Activated CD4-positive, alpha-beta T cell treated with anti-CD3 and anti-CD28 coated beads for 36 hours (primary cell): ENCODE measurements at regions of chr9 and their contacts with region 1.

Region 1: GRCh38 chr9:73183917-73184861 is 32.5 kb downstream of the ANXA1 start:
- DNase-seq: no peak
- ATAC-seq: no peak
- H3K4me3 Mint-ChIP-seq: no peak overlapping the region
- H3K27ac Mint-ChIP-seq: no peak overlapping the region
- H3K4me1 Mint-ChIP-seq: peaks cover 7% of the 10 kb centered on the region
- H3K27me3 Mint-ChIP-seq: peaks cover 9% of the 10 kb centered on the region

Region 2: GRCh38 chr9:72856972-72857623 is 327.1 kb before region 1 on chr9:
- CTCF ChIA-PET with region 1: interaction called, 3 read pairs
- POLR2A ChIA-PET with region 1: no interaction called
- intact Hi-C with region 1: loop called (anchors 5 kb)
- DNase-seq: peak; percentile 9
- ATAC-seq: no peak
- H3K4me3 Mint-ChIP-seq: no peak overlapping the region
- H3K27ac Mint-ChIP-seq: no peak overlapping the region
- H3K4me1 Mint-ChIP-seq: no peaks in the 10 kb centered on the region
- H3K27me3 Mint-ChIP-seq: no peaks in the 10 kb centered on the region

Region 3: GRCh38 chr9:72871685-72872084 is 312.5 kb before region 1 on chr9:
- CTCF ChIA-PET with region 1: no interaction called
- POLR2A ChIA-PET with region 1: no interaction called
- intact Hi-C with region 1: loop called in 1 of 2 experiments (anchors 5 kb)
- DNase-seq: no peak
- ATAC-seq: no peak
- H3K4me3 Mint-ChIP-seq: no peak overlapping the region
- H3K27ac Mint-ChIP-seq: no peak overlapping the region
- H3K4me1 Mint-ChIP-seq: no peaks in the 10 kb centered on the region
- H3K27me3 Mint-ChIP-seq: peaks cover 4% of the 10 kb centered on the region

Region 4: DNA sequence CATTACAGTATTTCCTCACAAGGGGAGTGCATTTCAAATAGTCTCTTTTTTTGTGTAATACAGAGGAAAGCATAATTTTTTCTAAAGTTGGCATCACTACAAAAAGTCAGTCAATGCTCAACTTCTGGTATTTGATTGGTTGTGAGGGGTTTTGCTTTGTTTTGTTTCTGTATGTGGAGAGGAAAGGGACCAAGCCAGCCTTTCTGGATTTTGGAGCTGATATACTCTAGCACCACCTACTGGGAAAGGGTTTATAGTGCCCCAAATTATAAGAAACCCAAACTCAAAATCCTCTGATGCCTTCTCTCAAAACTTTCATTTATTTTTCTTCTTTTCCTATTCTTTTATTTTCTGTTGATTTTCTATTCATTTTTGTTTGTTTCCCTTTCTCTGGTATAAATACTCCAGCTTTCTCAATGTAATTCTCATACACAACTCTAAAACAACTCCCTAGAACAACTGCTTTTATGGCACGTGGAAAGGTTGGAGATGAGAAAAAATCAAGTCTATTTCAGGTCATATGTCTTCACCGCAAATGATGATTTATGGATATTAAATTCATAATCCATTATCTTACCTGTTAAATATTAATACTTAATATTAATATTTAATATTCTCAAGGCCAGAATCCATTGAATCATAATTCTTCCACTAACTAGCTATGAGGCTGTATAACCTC is 102.1 kb before region 1 on chr9:
- CTCF ChIA-PET with region 1: interaction called, 16 read pairs
- POLR2A ChIA-PET with region 1: no interaction called
- intact Hi-C with region 1: no loop called
- DNase-seq: no peak
- ATAC-seq: no peak
- H3K4me3 Mint-ChIP-seq: no peak overlapping the region
- H3K27ac Mint-ChIP-seq: no peak overlapping the region
- H3K4me1 Mint-ChIP-seq: no peaks in the 10 kb centered on the region
- H3K27me3 Mint-ChIP-seq: peaks cover 3% of the 10 kb centered on the region

Region 5: DNA sequence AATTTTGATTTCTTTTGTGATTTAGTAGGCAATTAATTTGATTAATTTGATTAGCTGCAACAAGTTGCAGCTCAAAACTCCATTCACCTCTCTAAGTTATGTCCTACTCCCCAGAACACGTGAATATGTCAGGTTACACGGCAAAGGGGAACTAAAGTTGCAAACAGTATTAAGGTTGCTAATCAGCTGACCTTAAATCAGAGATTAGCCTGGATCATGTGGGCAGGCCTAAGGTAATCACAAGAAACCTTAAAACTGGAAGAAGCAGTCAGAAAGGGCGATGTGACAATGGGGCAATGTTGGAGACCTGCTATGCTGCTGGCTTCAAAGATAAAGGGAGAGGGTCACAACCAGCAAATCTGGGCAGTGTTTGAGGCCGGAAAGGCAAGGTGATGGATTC is 79.8 kb before region 1 on chr9:
- CTCF ChIA-PET with region 1: interaction called, 125 read pairs
- POLR2A ChIA-PET with region 1: no interaction called
- intact Hi-C with region 1: loop called (anchors 1 kb)
- DNase-seq: no peak
- ATAC-seq: no peak
- H3K4me3 Mint-ChIP-seq: no peak overlapping the region
- H3K27ac Mint-ChIP-seq: no peak overlapping the region
- H3K4me1 Mint-ChIP-seq: no peaks in the 10 kb centered on the region
- H3K27me3 Mint-ChIP-seq: peaks cover 3% of the 10 kb centered on the region

Region 6: DNA sequence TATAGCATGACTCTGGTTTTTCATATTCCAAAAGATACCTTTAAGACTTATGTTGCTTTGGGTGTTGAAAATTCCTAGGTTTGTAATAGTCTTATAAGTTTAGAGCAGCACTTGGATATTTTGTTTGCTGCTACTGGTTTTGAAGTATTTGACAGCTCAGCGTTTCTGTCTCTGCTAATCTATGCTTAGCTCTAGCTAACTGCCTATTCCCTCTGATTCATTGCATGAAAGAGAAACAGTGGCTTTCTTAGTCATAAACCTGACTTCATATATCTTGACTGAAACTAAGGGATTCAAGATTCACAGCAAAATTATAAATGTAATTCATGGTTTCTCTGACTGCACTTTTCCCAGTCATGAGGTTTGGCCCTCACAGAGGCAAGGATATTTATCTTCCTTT is 68.2 kb before region 1 on chr9:
- CTCF ChIA-PET with region 1: interaction called, 125 read pairs
- POLR2A ChIA-PET with region 1: no interaction called
- intact Hi-C with region 1: loop called in 1 of 2 experiments (anchors 2 kb)
- DNase-seq: peak; percentile 40
- ATAC-seq: peak; percentile 98
- H3K4me3 Mint-ChIP-seq: peak overlapping the region; percentile 12
- H3K27ac Mint-ChIP-seq: no peak overlapping the region
- H3K4me1 Mint-ChIP-seq: peaks cover 46% of the 10 kb centered on the region
- H3K27me3 Mint-ChIP-seq: no peaks in the 10 kb centered on the region